ENCODE measurements at regions of chr1 and their contacts with region 1.

Region 1: GRCh38 chr1:62436466-62437256 is at the start of gene USP1:
- DNase-seq: peak; percentile 99
- H3K4me3 ChIP-seq: peak within 1 kb of the TSS; percentile 94
- H3K27ac ChIP-seq: peak within 1 kb of the TSS; percentile 95
- H3K4me1 ChIP-seq: peaks cover 44% of the 10 kb centered on the region
- CTCF ChIP-seq: no peak
- total RNA-seq, gene USP1: 69.6 and 82.7 TPM in 2 replicates

Region 2: GRCh38 chr1:61077676-61078541 is 1358.8 kb before region 1 on chr1:
- CTCF ChIA-PET with region 1: no interaction called
- POLR2A ChIA-PET with region 1: no interaction called
- intact Hi-C with region 1: loop called (anchors 2 kb)
- DNase-seq: peak; percentile 100
- H3K4me3 ChIP-seq: peak overlapping the region; percentile 74
- H3K27ac ChIP-seq: peak overlapping the region; percentile 91
- H3K4me1 ChIP-seq: peaks cover 45% of the 10 kb centered on the region
- CTCF ChIP-seq: 0 out of 2 replicates have a peak, but pooled peaks have one; percentile 8

Region 3: DNA sequence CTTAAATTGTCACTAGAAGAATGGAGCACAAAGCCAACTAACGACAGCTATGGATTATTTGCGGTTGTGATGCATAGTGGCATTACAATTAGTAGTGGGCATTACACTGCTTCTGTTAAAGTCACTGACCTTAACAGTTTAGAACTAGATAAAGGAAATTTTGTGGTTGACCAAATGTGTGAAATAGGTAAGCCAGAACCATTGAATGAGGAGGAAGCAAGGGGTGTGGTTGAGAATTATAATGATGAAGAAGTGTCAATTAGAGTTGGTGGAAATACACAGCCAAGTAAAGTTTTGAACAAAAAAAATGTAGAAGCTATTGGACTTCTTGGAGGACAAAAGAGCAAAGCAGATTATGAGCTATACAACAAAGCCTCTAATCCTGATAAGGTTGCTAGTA is 13.6 kb after region 1 on chr1:
- CTCF ChIA-PET with region 1: no interaction called
- POLR2A ChIA-PET with region 1: interaction called, 11 read pairs
- intact Hi-C with region 1: no loop called
- DNase-seq: no peak
- H3K4me3 ChIP-seq: no peak overlapping the region
- H3K27ac ChIP-seq: no peak overlapping the region
- H3K4me1 ChIP-seq: no peaks in the 10 kb centered on the region
- CTCF ChIP-seq: no peak

Region 4: GRCh38 chr1:62493656-62494055 is 57.0 kb after region 1 on chr1:
- CTCF ChIA-PET with region 1: no interaction called
- POLR2A ChIA-PET with region 1: no interaction called
- intact Hi-C with region 1: no loop called
- DNase-seq: no peak
- H3K4me3 ChIP-seq: no peak overlapping the region
- H3K27ac ChIP-seq: no peak overlapping the region
- H3K4me1 ChIP-seq: no peaks in the 10 kb centered on the region
- CTCF ChIP-seq: no peak

Region 5: DNA sequence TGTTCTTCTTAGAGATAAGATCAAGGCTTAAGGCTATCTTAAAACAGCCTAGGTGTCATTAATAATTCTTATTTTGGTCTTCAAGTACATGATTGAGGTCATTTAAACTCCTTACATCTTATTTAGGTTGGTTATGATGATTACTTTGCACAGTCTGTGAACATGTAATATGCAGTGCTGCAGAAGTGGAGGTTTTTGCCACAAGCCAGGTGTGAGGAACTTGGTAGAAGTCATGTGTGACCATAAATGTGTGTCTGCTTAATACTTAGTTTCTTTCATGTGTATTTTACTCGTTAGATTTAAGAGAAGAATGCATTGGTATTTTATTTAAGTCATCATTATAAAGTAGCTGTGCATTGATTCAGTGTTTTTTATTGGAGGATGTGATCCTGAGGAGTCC is 357.4 kb after region 1 on chr1:
- CTCF ChIA-PET with region 1: no interaction called
- POLR2A ChIA-PET with region 1: no interaction called
- intact Hi-C with region 1: loop called (anchors 5 kb)
- DNase-seq: peak; percentile 36
- H3K4me3 ChIP-seq: no peak overlapping the region
- H3K27ac ChIP-seq: peak overlapping the region; percentile 18
- H3K4me1 ChIP-seq: peaks cover 23% of the 10 kb centered on the region
- CTCF ChIP-seq: no peak

Region 6: GRCh38 chr1:63522891-63523728 is 1086.4 kb after region 1 on chr1 and contains the starts of genes EFCAB7 and ITGB3BP:
- CTCF ChIA-PET with region 1: no interaction called
- POLR2A ChIA-PET with region 1: no interaction called
- intact Hi-C with region 1: loop called (anchors 5 kb)
- DNase-seq: peak; percentile 96
- H3K4me3 ChIP-seq: peak within 1 kb of the TSS; percentile 95
- H3K27ac ChIP-seq: peak within 1 kb of the TSS; percentile 82
- H3K4me1 ChIP-seq: peaks cover 31% of the 10 kb centered on the region
- CTCF ChIP-seq: no peak
- total RNA-seq, gene EFCAB7: 7.1 and 10.5 TPM in 2 replicates
- total RNA-seq, gene ITGB3BP: 91.5 and 97.5 TPM in 2 replicates